Caco-2 (cell line): ENCODE measurements at regions of chr6 and their contacts with region 1.

Region 1: DNA sequence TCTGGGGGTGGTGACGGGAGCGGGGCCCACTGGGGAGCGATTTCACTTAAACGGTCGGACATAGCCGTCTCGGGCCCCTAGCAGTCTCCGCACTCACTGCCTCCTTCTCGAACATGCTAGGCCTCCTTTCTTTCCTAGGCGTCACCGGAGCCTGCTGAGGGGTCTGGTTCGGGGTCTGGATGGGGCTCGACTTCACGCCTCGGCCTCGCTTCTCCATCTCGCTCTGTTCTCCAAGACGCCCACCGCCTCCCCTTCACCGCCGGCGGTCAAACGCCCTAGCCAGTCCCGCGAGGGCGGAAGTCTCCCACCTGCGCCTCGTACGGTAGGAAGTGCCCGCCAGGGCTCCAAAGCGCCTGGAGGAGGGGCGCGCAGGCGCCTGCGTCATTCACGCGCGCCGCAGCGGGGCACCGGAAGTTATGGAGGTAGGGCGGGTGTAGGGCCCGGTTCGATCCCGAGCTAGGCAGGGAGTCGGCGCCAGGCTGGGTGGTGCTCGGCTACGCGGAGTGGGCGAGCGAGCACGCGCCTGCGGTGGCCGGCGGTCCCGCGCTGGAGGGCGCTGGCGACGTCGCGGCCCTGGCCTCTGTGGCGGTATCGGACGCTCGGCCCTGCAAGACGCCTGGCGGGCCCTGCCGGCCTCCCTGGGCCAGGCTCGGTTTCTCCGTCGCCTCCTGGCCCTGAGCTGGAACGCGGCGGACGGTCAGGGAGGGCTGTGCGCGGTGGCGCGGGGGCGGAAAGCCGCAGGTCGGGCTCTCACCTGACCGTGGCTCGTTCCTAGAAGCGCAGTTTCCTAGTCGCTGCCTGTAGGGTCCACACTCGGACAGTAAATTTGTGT is at the starts of genes DYNLT2 and ERMARD:
- DNase-seq: peak; percentile 94 to 96
- H3K4me3 ChIP-seq: peak within 1 kb of the TSS; percentile 73
- H3K4me3 Mint-ChIP-seq: peak within 1 kb of the TSS; percentile 99
- H3K27ac Mint-ChIP-seq: peak within 1 kb of the TSS; percentile 100
- H3K4me1 ChIP-seq: peaks cover 12% of the 10 kb centered on the region
- H3K4me1 Mint-ChIP-seq: peaks cover 12% of the 10 kb centered on the region
- H3K27me3 ChIP-seq: no peaks in the 10 kb centered on the region
- H3K27me3 Mint-ChIP-seq: no peaks in the 10 kb centered on the region
- CTCF ChIP-seq: no peak
- total RNA-seq, gene DYNLT2: 2.4 and 2.6 TPM in 2 replicates
- total RNA-seq, gene ERMARD: 17.0 and 25.3 TPM in 2 replicates

Region 2: DNA sequence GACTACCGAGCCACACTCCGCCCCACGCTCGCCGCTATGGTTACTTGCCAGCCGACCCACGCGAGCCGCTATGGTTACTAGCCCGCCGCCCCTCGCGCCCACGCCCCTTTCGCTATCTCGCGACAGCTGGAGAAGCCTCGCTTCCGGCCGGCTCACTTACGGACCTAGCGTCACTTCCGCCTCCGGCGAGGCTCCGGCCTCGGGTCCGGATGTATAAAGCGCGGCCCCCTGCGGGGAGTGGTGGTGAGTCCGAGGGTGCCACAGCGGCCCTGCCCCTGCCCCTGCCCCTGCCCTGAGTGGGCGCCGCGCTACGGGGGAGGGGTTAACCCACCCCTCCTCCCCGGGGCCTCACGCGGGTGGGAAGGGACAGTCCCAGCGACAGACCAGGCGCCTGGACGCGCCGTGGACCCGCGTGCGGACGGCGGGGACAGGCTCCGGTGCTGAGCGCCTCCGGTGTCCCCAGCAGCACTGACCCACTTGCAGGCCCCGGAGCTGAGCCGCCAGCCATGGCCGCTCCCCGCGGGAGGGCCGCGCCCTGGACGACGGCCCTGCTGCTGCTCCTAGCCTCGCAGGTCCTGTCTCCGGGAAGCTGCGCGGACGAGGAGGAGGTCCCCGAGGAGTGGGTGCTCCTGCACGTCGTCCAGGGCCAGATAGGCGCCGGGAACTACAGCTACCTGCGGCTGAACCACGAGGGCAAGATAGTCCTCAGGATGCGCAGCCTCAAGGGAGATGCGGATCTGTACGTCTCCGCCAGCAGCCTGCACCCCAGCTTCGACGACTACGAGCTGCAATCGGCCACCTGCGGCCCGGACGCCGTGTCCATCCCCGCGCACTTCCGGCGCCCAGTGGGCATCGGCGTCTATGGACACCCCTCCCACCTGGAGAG is 49.3 kb before region 1 on chr6 and contains the starts of genes C6orf120 and WDR27:
- CTCF ChIA-PET with region 1: no interaction called
- POLR2A ChIA-PET with region 1: interaction called, 3 read pairs
- intact Hi-C with region 1: loop called (anchors 1 kb)
- DNase-seq: peak; percentile 95 to 97
- H3K4me3 ChIP-seq: peak within 1 kb of the TSS; percentile 87
- H3K4me3 Mint-ChIP-seq: peak within 1 kb of the TSS; percentile 85
- H3K27ac Mint-ChIP-seq: peak within 1 kb of the TSS; percentile 85
- H3K4me1 ChIP-seq: peaks cover 25% of the 10 kb centered on the region
- H3K4me1 Mint-ChIP-seq: peaks cover 13% of the 10 kb centered on the region
- H3K27me3 ChIP-seq: no peaks in the 10 kb centered on the region
- H3K27me3 Mint-ChIP-seq: no peaks in the 10 kb centered on the region
- CTCF ChIP-seq: no peak
- total RNA-seq, gene C6orf120: 24.9 and 26.4 TPM in 2 replicates
- total RNA-seq, gene WDR27: 62.9 and 70.1 TPM in 2 replicates

Region 3: DNA sequence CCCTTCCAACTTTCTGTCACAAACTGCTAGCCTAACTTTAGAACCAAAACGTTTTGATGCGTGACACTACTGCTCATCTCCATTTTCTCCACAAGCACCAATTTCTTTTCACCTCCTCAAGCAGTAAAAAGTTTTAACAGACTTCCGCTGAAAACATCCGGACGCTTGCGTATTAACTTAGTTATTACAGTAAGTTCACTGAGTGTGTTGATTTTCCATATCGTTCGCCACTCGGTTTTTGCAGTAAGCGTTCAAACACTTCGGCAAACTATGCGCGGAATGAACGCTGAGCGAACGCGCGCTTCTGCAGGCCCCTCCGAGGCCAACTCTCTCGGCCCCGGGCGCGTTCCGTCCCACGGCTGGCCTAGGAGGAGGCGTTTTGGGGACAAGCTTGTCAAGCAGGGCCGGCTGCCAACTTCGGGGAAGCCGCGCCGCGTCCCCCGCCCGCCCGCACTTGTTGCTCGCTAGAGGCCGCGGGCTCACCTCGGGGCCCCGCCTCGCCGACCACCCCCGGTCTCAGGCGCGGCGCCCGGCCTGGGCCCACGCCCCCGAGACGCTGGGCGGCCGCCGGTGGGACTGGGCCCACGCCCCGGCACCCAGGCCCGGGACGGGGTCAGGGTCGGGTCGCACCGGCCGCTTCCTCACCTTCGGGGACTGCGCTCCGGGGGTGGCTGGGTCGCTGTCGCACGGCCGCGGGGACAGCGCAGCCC is 28.1 kb before region 1 on chr6:
- CTCF ChIA-PET with region 1: no interaction called
- POLR2A ChIA-PET with region 1: interaction called, 14 read pairs
- intact Hi-C with region 1: loop called (anchors 1 kb)
- DNase-seq: peak in 1 of 2 experiments; percentile 56
- H3K4me3 ChIP-seq: peak overlapping the region; percentile 77
- H3K4me3 Mint-ChIP-seq: peak overlapping the region; percentile 89
- H3K27ac Mint-ChIP-seq: peak overlapping the region; percentile 75
- H3K4me1 ChIP-seq: peaks cover 22% of the 10 kb centered on the region
- H3K4me1 Mint-ChIP-seq: peaks cover 20% of the 10 kb centered on the region
- H3K27me3 ChIP-seq: no peaks in the 10 kb centered on the region
- H3K27me3 Mint-ChIP-seq: no peaks in the 10 kb centered on the region
- CTCF ChIP-seq: no peak